ENCODE measurements at regions of chr21 and their contacts with region 1.

Region 1: DNA sequence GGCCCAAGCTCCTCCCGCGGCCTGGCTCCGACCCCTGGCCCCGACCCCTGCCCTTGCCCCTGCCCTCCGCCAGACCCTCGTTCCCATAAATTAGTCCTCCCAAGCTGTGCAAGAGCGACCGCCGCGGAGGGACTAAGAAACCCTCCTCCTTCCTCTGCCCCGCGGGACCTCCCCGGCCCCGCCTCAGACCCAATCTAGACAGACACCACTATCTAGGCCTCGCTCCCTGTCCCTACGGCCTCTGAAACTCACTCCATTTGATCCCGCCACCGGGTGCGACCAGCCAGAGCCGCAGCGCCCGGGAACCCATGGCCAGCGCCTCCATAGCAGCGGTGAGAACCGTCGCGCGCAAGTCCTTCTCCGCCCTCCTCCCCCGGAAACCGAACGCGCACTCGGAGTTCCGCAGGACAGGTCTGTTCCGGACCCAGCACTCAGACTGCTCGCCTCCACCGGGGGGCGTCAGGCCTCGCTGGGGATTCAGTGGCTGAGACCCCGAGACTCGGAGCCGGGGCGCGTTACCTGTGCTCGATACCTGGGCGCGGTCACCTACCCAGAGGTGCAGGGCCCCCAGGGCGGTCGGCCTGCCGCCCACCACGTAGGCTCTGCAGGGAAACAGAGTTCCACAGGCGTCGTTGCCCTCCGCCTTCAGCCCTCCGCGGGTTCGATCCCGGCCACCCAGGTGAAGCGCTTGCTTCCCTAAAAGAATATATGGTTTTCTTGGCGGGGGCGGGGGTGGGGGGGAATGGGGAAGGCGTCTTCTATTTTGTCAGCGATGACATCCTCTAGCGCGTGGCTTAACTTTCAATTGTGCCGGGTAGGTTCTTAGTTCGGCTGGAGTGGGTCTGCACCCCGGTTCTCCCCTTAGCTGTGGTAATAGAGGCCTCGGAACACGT is at the start of gene MRPL39:
- DNase-seq: peak; percentile 93
- H3K4me3 Mint-ChIP-seq: peak within 1 kb of the TSS; percentile 97
- H3K27ac Mint-ChIP-seq: peak within 1 kb of the TSS; percentile 91
- H3K4me1 Mint-ChIP-seq: peaks cover 41% of the 10 kb centered on the region
- H3K27me3 Mint-ChIP-seq: no peaks in the 10 kb centered on the region
- total RNA-seq, gene MRPL39: 71.7 to 73.6 TPM

Region 2: GRCh38 chr21:25421327-25422028 is 185.9 kb before region 1 on chr21:
- CTCF ChIA-PET with region 1: interaction called, 4 read pairs
- POLR2A ChIA-PET with region 1: no interaction called
- intact Hi-C with region 1: loop called (anchors 1 kb)
- DNase-seq: peak; percentile 79
- H3K4me3 Mint-ChIP-seq: peak overlapping the region; percentile 67
- H3K27ac Mint-ChIP-seq: peak overlapping the region; percentile 89
- H3K4me1 Mint-ChIP-seq: peaks cover 62% of the 10 kb centered on the region
- H3K27me3 Mint-ChIP-seq: no peaks in the 10 kb centered on the region

Region 3: GRCh38 chr21:25567472-25567871 is 39.9 kb before region 1 on chr21:
- CTCF ChIA-PET with region 1: no interaction called
- POLR2A ChIA-PET with region 1: no interaction called
- intact Hi-C with region 1: no loop called
- DNase-seq: no peak
- H3K4me3 Mint-ChIP-seq: peak overlapping the region; percentile 80
- H3K27ac Mint-ChIP-seq: peak overlapping the region; percentile 94
- H3K4me1 Mint-ChIP-seq: peaks cover 58% of the 10 kb centered on the region
- H3K27me3 Mint-ChIP-seq: no peaks in the 10 kb centered on the region

Region 4: GRCh38 chr21:25700741-25701140 is 93.3 kb after region 1 on chr21:
- CTCF ChIA-PET with region 1: interaction called, 78 read pairs
- POLR2A ChIA-PET with region 1: no interaction called
- intact Hi-C with region 1: no loop called
- DNase-seq: no peak
- H3K4me3 Mint-ChIP-seq: no peak overlapping the region
- H3K27ac Mint-ChIP-seq: no peak overlapping the region
- H3K4me1 Mint-ChIP-seq: no peaks in the 10 kb centered on the region
- H3K27me3 Mint-ChIP-seq: no peaks in the 10 kb centered on the region

Region 5: GRCh38 chr21:25801217-25802014 is 194.0 kb after region 1 on chr21:
- CTCF ChIA-PET with region 1: interaction called, 26 read pairs
- POLR2A ChIA-PET with region 1: interaction called, 3 read pairs
- intact Hi-C with region 1: loop called (anchors 1 kb)
- DNase-seq: peak; percentile 93
- H3K4me3 Mint-ChIP-seq: no peak overlapping the region
- H3K27ac Mint-ChIP-seq: no peak overlapping the region
- H3K4me1 Mint-ChIP-seq: peaks cover 6% of the 10 kb centered on the region
- H3K27me3 Mint-ChIP-seq: peaks cover 16% of the 10 kb centered on the region

Region 6: GRCh38 chr21:26070822-26071425 is 463.5 kb after region 1 on chr21:
- CTCF ChIA-PET with region 1: no interaction called
- POLR2A ChIA-PET with region 1: no interaction called
- intact Hi-C with region 1: loop called (anchors 10 kb)
- DNase-seq: peak; percentile 39
- H3K4me3 Mint-ChIP-seq: peak overlapping the region; percentile 56
- H3K27ac Mint-ChIP-seq: peak overlapping the region; percentile 67
- H3K4me1 Mint-ChIP-seq: peaks cover 44% of the 10 kb centered on the region
- H3K27me3 Mint-ChIP-seq: no peaks in the 10 kb centered on the region